ENCODE measurements at regions of chr12 and their contacts with region 1.

Region 1: GRCh38 chr12:45803652-45804594 is 74.4 kb downstream of the ARID2 start:
- DNase-seq: no peak
- H3K4me3 ChIP-seq: no peak overlapping the region
- H3K27ac ChIP-seq: no peak overlapping the region
- H3K4me1 ChIP-seq: no peaks in the 10 kb centered on the region
- H3K27me3 ChIP-seq: no peaks in the 10 kb centered on the region
- CTCF ChIP-seq: no peak

Region 2: DNA sequence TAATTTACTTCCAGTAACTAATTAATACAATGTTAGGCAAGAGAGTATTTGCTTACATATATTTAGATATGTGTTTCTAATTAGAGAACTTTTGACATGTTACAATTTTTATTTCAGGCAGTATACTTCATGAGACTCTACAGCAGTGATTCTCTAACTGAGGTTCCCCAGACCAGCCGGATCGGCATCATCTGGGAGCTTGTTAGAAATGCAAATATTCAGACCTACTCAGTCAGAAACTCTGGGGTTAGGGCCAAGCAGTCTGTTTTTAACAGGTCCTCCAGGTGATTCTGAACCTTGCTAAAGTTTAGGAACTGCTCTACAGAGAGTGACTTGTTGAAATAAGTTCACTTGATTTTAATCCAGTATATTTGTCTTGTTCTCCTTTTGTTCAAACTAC is 28.0 kb before region 1 on chr12:
- CTCF ChIA-PET with region 1: no interaction called
- POLR2A ChIA-PET with region 1: no interaction called
- intact Hi-C with region 1: no loop called
- DNase-seq: no peak
- H3K4me3 ChIP-seq: no peak overlapping the region
- H3K27ac ChIP-seq: no peak overlapping the region
- H3K4me1 ChIP-seq: no peaks in the 10 kb centered on the region
- H3K27me3 ChIP-seq: no peaks in the 10 kb centered on the region
- CTCF ChIP-seq: no peak

Region 3: DNA sequence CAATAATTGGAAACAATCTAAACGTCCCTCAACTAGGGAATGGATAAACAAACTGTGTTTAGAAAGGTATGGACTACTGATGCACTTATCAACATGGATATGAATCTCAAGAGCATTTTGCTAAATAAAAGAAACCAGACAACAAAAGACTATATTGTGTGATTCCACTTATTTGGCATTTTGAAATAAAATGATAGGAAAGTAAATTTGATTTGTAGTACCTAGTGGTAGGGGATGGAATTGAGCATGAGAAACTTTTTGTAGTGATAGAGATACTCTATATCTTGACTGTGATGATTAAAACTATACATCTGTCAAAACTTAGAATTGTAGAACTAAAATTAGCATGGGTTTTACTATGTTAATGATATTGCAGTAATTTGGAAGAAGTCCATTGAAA is 12.7 kb after region 1 on chr12:
- CTCF ChIA-PET with region 1: interaction called, 11 read pairs
- POLR2A ChIA-PET with region 1: no interaction called
- intact Hi-C with region 1: no loop called
- DNase-seq: no peak
- H3K4me3 ChIP-seq: no peak overlapping the region
- H3K27ac ChIP-seq: no peak overlapping the region
- H3K4me1 ChIP-seq: no peaks in the 10 kb centered on the region
- H3K27me3 ChIP-seq: no peaks in the 10 kb centered on the region
- CTCF ChIP-seq: no peak

Measured in PC-9 (cell line).